Endothelial cell of umbilical vein (primary cell): ENCODE measurements at regions of chr1 and their contacts with region 1.

Region 1: DNA sequence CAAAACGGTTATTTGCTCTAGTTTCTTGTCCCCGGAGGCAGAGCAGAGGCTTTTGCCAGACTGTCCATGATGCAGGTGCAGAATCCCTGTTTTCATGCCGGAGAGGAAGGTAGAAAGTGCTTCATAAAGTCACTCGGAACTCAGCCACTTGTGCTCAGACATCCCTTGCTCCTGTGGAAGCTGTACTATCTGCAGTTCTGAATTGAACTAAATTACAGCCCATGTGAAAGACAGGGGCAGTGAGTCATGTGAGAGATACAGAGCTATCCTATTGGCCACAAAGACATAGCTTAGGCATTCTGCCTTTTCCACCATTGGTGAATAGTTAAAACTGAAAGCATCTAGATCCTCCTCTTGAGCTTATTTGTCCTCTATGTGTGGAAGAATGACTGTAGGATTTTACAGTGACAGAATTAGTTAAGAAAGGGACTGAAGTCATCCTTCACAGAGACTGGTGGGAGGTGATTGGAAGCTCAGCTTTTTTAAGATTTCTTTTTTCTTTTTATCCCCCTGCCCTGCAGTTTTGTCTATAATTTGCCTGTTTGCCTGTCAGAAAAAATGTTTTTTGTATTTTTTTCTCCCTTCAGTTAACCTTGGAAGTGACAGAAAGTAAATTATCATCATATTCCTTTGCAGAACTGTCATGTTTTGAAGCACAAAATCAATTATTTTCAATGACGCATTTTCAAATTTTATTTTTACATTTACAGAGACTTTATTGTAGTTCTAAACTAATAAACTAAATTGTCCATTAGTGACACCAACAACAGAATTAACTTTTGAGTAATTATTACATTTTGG is 298.6 kb downstream of the PTPRC start:
- DNase-seq: peak; percentile 95
- H3K4me3 ChIP-seq: peak overlapping the region; percentile 63 to 99 (median 93)
- H3K27ac ChIP-seq: peak overlapping the region; percentile 95
- H3K4me1 ChIP-seq: peaks cover 17% of the 10 kb centered on the region
- H3K27me3 ChIP-seq: no peaks in the 10 kb centered on the region
- CTCF ChIP-seq: no peak
- POLR2A ChIP-seq: peak; percentile 96

Region 2: DNA sequence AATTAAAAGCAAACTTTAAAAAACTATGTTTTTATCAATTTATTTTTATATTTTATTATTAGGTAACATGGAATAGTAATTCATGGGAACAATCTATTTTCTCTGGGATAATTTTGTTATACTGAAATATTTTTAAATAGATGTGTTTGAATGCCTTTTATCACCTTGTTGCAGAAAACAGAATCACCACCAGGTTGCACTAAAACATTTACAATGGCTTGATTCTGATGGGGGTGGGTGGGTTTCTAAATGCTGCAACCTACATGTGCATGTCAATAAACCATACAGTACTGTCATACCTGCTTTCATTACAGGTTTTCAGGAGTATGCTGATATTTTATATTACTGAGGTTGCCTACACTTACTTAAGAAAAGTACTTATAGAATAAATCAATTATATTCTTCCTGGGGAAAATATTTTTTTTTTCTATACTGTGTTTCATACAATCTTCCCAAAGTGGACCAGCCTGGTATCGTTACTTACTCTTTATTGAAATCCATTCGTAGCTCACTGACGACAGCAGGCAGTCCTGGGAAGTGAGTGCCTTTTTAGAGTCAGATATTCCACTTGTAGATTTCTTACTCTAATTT is 165.8 kb before region 1 on chr1:
- CTCF ChIA-PET with region 1: interaction called, 9 read pairs
- POLR2A ChIA-PET with region 1: interaction called, 11 read pairs
- dilution Hi-C with region 1: no loop called
- intact Hi-C with region 1: loop called (anchors 1 kb)
- DNase-seq: peak; percentile 82
- H3K4me3 ChIP-seq: no peak overlapping the region
- H3K27ac ChIP-seq: no peak overlapping the region
- H3K4me1 ChIP-seq: peaks cover 11% of the 10 kb centered on the region
- H3K27me3 ChIP-seq: no peaks in the 10 kb centered on the region
- CTCF ChIP-seq: peak; percentile 45 to 46
- POLR2A ChIP-seq: no peak

Region 3: GRCh38 chr1:198880818-198881597 is 56.4 kb before region 1 on chr1:
- CTCF ChIA-PET with region 1: interaction called, 3 read pairs
- POLR2A ChIA-PET with region 1: no interaction called
- dilution Hi-C with region 1: no loop called
- intact Hi-C with region 1: loop called (anchors 1 kb)
- DNase-seq: peak; percentile 87
- H3K4me3 ChIP-seq: no peak overlapping the region
- H3K27ac ChIP-seq: peak overlapping the region; percentile 58
- H3K4me1 ChIP-seq: peaks cover 15% of the 10 kb centered on the region
- H3K27me3 ChIP-seq: no peaks in the 10 kb centered on the region
- CTCF ChIP-seq: no peak
- POLR2A ChIP-seq: no peak

Region 4: GRCh38 chr1:198919667-198920398 is 17.6 kb before region 1 on chr1:
- CTCF ChIA-PET with region 1: interaction called, 4 read pairs
- POLR2A ChIA-PET with region 1: interaction called, 5 read pairs
- dilution Hi-C with region 1: no loop called
- intact Hi-C with region 1: loop called (anchors 1 kb)
- DNase-seq: no peak
- H3K4me3 ChIP-seq: no peak overlapping the region
- H3K27ac ChIP-seq: peak overlapping the region; percentile 31
- H3K4me1 ChIP-seq: peaks cover 44% of the 10 kb centered on the region
- H3K27me3 ChIP-seq: no peaks in the 10 kb centered on the region
- CTCF ChIP-seq: no peak
- POLR2A ChIP-seq: no peak

Region 5: GRCh38 chr1:199272643-199273086 is 335.2 kb after region 1 on chr1:
- CTCF ChIA-PET with region 1: no interaction called
- POLR2A ChIA-PET with region 1: interaction called, 3 read pairs
- dilution Hi-C with region 1: no loop called
- intact Hi-C with region 1: loop called (anchors 1 kb)
- DNase-seq: peak; percentile 97
- H3K4me3 ChIP-seq: no peak overlapping the region
- H3K27ac ChIP-seq: peak overlapping the region; percentile 97
- H3K4me1 ChIP-seq: peaks cover 25% of the 10 kb centered on the region
- H3K27me3 ChIP-seq: no peaks in the 10 kb centered on the region
- CTCF ChIP-seq: no peak
- POLR2A ChIP-seq: peak; percentile 49

Region 6: GRCh38 chr1:199463521-199464128 is 526.2 kb after region 1 on chr1:
- CTCF ChIA-PET with region 1: interaction called, 17 read pairs
- POLR2A ChIA-PET with region 1: interaction called, 6 read pairs
- dilution Hi-C with region 1: no loop called
- intact Hi-C with region 1: loop called (anchors 1 kb)
- DNase-seq: peak; percentile 71
- H3K4me3 ChIP-seq: no peak overlapping the region
- H3K27ac ChIP-seq: no peak overlapping the region
- H3K4me1 ChIP-seq: peaks cover 5% of the 10 kb centered on the region
- H3K27me3 ChIP-seq: no peaks in the 10 kb centered on the region
- CTCF ChIP-seq: peak; percentile 67 to 68
- POLR2A ChIP-seq: no peak

Region 7: GRCh38 chr1:199474738-199475137 is 537.3 kb after region 1 on chr1:
- CTCF ChIA-PET with region 1: no interaction called
- POLR2A ChIA-PET with region 1: no interaction called
- dilution Hi-C with region 1: no loop called
- intact Hi-C with region 1: no loop called
- DNase-seq: no peak
- H3K4me3 ChIP-seq: no peak overlapping the region
- H3K27ac ChIP-seq: no peak overlapping the region
- H3K4me1 ChIP-seq: no peaks in the 10 kb centered on the region
- H3K27me3 ChIP-seq: no peaks in the 10 kb centered on the region
- CTCF ChIP-seq: no peak
- POLR2A ChIP-seq: no peak